Caco-2 (cell line): ENCODE measurements at regions of chr14 and their contacts with region 1.

Region 1: DNA sequence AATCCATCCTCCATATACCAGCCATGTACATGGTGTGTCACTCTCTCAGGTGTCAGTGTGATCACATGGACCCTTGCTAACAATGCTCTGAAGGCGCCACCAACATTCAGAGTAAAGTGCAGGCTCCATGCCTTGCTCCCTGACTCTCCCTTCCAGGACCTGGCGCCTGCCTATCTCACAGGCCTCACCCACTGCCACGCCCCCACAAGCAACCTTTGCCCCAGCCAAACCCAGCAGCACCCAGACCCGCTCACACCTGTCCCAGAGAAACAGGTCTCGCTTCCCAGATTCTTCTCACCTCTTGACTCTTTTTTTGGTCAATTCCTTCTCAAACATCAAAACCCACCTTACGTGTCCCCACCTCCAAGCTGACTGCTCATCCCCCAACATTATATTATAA is 52.3 kb downstream of the KCNK10 start:
- DNase-seq: peak; percentile 87 to 88
- H3K4me3 ChIP-seq: no peak overlapping the region
- H3K4me3 Mint-ChIP-seq: peak overlapping the region; percentile 33
- H3K27ac Mint-ChIP-seq: peak overlapping the region; percentile 79
- H3K4me1 ChIP-seq: peaks cover 20% of the 10 kb centered on the region
- H3K4me1 Mint-ChIP-seq: peaks cover 22% of the 10 kb centered on the region
- H3K27me3 ChIP-seq: no peaks in the 10 kb centered on the region
- H3K27me3 Mint-ChIP-seq: no peaks in the 10 kb centered on the region
- CTCF ChIP-seq: no peak

Region 2: DNA sequence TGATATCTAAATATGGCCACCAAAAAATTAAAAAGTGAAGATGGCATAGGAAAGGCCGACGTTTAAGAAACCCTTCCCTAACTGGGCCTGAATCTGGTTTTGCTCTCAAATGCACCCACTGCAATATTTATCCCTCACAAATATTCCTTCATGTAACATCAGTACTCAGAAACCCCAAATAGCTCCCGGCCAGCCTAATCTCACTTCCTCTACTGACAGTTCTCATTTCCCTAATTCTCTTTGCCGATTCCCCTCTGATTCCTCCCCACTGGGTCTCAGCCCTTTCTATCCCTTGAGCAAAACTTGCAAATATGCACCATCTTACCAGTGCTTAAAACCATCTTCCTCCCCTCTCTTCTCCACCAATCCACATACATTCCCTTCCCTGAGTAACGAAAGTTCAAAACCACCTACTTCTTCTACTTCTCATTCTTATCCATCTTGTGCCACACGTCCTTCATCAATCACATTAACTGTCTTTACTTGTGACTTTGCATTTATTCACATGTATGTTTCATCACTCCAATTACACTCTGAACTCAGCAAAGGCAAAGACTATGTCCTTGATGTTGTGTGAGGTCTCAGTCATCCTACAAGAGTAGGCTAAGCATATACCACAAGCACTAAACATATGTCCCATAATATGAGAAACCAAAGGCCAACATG is 29.2 kb after region 1 on chr14:
- CTCF ChIA-PET with region 1: no interaction called
- POLR2A ChIA-PET with region 1: no interaction called
- intact Hi-C with region 1: no loop called
- DNase-seq: no peak
- H3K4me3 ChIP-seq: no peak overlapping the region
- H3K4me3 Mint-ChIP-seq: no peak overlapping the region
- H3K27ac Mint-ChIP-seq: no peak overlapping the region
- H3K4me1 ChIP-seq: no peaks in the 10 kb centered on the region
- H3K4me1 Mint-ChIP-seq: no peaks in the 10 kb centered on the region
- H3K27me3 ChIP-seq: no peaks in the 10 kb centered on the region
- H3K27me3 Mint-ChIP-seq: no peaks in the 10 kb centered on the region
- CTCF ChIP-seq: no peak

Region 3: GRCh38 chr14:88346048-88346639 is 75.4 kb after region 1 on chr14:
- CTCF ChIA-PET with region 1: no interaction called
- POLR2A ChIA-PET with region 1: no interaction called
- intact Hi-C with region 1: loop called (anchors 2 kb)
- DNase-seq: no peak
- H3K4me3 ChIP-seq: no peak overlapping the region
- H3K4me3 Mint-ChIP-seq: no peak overlapping the region
- H3K27ac Mint-ChIP-seq: no peak overlapping the region
- H3K4me1 ChIP-seq: no peaks in the 10 kb centered on the region
- H3K4me1 Mint-ChIP-seq: no peaks in the 10 kb centered on the region
- H3K27me3 ChIP-seq: no peaks in the 10 kb centered on the region
- H3K27me3 Mint-ChIP-seq: no peaks in the 10 kb centered on the region
- CTCF ChIP-seq: no peak